Activated B cell treated with CpG ODN at 0.5 μM for 24 hours (primary cell): ENCODE measurements at regions of chr10 and their contacts with region 1.

Region 1: GRCh38 chr10:102869258-102870198 is at the start of gene AS3MT:
- DNase-seq: no peak
- ATAC-seq: peak; percentile 66
- H3K4me3 Mint-ChIP-seq: peak within 1 kb of the TSS; percentile 68
- H3K27ac Mint-ChIP-seq: no peak within 1 kb of the TSS
- H3K4me1 Mint-ChIP-seq: peaks cover 16% of the 10 kb centered on the region
- H3K27me3 Mint-ChIP-seq: peaks cover 26% of the 10 kb centered on the region
- CTCF ChIP-seq: no peak
- total RNA-seq, gene AS3MT: 0.31 and 0.46 TPM in 2 replicates

Region 2: DNA sequence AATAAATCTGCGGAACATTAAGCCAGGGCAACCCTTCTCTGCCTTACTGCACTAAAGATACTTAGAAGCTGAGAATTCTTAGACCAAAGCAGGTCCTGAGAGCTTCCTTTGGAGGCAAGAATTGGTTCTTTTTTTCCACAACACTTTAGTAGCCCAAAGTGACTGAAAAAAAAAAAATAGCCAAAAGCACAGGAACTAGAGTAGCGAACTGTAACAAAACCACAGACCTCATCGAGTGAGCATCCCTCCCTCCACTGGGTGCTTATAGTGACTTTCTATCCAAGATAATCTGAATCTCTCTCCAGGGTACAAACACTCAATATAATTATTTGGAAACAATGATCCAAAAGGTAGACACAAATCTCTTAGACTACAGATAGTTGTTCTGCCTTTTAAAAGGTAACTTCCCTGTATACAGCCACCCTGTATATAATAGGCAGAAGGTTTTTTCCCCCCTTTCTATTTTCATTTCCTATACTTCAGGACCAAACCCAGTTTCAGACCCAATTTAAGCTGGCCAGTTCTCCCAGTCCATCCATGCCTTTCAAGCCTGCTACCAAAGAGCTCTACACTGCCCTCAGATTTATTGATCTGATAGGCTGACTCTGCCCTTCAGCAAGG is 994.4 kb before region 1 on chr10:
- CTCF ChIA-PET with region 1: no interaction called
- POLR2A ChIA-PET with region 1: interaction called, 10 read pairs
- intact Hi-C with region 1: no loop called
- DNase-seq: no peak
- ATAC-seq: peak; percentile 60
- H3K4me3 Mint-ChIP-seq: no peak overlapping the region
- H3K27ac Mint-ChIP-seq: peak overlapping the region; percentile 10
- H3K4me1 Mint-ChIP-seq: peaks cover 23% of the 10 kb centered on the region
- H3K27me3 Mint-ChIP-seq: no peaks in the 10 kb centered on the region
- CTCF ChIP-seq: no peak

Region 3: DNA sequence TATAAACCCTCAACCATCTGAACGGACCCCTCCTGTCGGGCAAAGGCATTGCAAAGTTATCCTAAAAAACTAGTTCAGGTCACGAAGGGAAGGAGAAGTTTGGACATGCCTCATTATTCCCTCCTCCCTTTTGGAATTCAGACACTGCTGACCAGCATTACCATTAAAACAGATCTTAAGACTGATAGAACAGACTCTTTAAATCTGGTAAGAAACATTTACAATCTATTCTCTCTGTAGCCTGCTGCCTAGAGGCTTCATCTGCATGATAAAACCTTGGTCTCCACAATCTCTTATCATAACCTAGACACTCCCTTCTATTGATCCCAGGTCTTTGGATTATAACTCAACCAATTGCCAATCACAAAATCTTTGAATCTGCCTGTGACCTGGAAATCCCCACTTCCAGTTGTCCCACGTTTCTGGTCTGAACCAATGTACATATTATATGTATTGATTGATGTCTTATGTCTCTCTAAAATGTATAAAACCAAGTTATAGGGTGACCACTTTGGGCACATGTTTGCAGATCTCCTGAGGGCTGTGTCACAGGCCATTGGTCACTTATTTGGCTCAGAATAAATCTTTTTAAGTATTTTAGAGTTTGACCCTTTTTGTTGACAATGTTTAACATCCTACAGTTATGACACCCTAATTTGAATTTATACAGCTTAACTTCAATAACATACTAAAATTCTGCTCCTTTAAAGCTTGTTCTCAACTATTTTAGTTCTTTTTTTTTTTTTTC is 25.1 kb after region 1 on chr10:
- CTCF ChIA-PET with region 1: no interaction called
- POLR2A ChIA-PET with region 1: no interaction called
- intact Hi-C with region 1: no loop called
- DNase-seq: no peak
- ATAC-seq: no peak
- H3K4me3 Mint-ChIP-seq: no peak overlapping the region
- H3K27ac Mint-ChIP-seq: no peak overlapping the region
- H3K4me1 Mint-ChIP-seq: no peaks in the 10 kb centered on the region
- H3K27me3 Mint-ChIP-seq: no peaks in the 10 kb centered on the region
- CTCF ChIP-seq: no peak